CD14-positive monocyte (primary cell): ENCODE measurements at regions of chr17 and their contacts with region 1.

Region 1: GRCh38 chr17:979538-980405 is at the start of gene NXN:
- DNase-seq: peak; percentile 60 to 83 (median 77)
- H3K4me3 ChIP-seq: peak within 1 kb of the TSS; percentile 55 to 81 (median 57)
- H3K4me3 Mint-ChIP-seq: peak within 1 kb of the TSS; percentile 83 to 90
- H3K27ac ChIP-seq: peak within 1 kb of the TSS in 1 of 2 donors; percentile 11
- H3K27ac Mint-ChIP-seq: peak within 1 kb of the TSS in 4 of 7 donors; percentile 26 to 66 (median 41)
- H3K4me1 ChIP-seq: peaks cover 20 to 21% of the 10 kb centered on the region in 2 donors
- H3K4me1 Mint-ChIP-seq: peaks cover 24% of the 10 kb centered on the region
- H3K27me3 ChIP-seq: peaks cover 30 to 41% of the 10 kb centered on the region in 2 donors
- H3K27me3 Mint-ChIP-seq: peaks cover 32 to 50% (median 35%) of the 10 kb centered on the region in 3 donors
- CTCF ChIP-seq: no peak
- polyA plus RNA-seq, gene NXN: not detected

Region 2: GRCh38 chr17:781805-782731 is 197.7 kb before region 1 on chr17 and contains the starts of genes GLOD4 and MRM3:
- intact Hi-C with region 1: loop called in 1 of 2 experiments (anchors 5 kb)
- DNase-seq: peak; percentile 90 to 93 (median 92)
- H3K4me3 ChIP-seq: peak within 1 kb of the TSS; percentile 81 to 98 (median 86)
- H3K4me3 Mint-ChIP-seq: peak within 1 kb of the TSS; percentile 94 to 98
- H3K27ac ChIP-seq: peak within 1 kb of the TSS; percentile 51 to 97
- H3K27ac Mint-ChIP-seq: peak within 1 kb of the TSS; percentile 92 to 99 (median 96)
- H3K4me1 ChIP-seq: peaks cover 17 to 24% of the 10 kb centered on the region in 2 donors
- H3K4me1 Mint-ChIP-seq: peaks cover 16% of the 10 kb centered on the region
- H3K27me3 ChIP-seq: no peaks in the 10 kb centered on the region
- H3K27me3 Mint-ChIP-seq: peaks cover 0 to 2% (median 1%) of the 10 kb centered on the region in 3 donors
- CTCF ChIP-seq: no peak
- polyA plus RNA-seq, gene GLOD4: 41.8 to 50.7 (median 50.6) TPM
- polyA plus RNA-seq, gene MRM3: 9.3 to 15.4 (median 12.8) TPM

Region 3: DNA sequence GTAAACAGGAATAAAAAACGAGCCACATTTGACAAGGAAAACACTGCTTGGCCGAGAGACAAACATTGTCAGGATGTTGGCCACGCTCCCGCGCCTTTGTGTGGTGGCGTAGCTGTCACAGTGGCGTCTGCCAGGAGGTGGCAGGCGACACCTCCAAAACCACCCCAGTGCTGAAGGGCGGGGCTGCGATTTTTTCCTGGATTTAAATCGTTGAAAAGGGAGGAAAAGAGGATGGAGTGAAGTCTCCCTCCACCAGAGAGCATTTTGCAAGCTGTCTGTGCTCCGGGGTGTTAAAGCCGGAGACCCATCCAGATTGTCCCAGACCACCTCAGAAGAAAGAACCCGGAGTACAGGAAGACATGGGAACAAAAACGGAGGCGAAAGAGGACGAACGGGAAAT is 184.9 kb before region 1 on chr17:
- intact Hi-C with region 1: loop called (anchors 5 kb)
- DNase-seq: peak in 2 of 3 donors; percentile 16 to 34
- H3K4me3 ChIP-seq: no peak overlapping the region
- H3K4me3 Mint-ChIP-seq: peak overlapping the region in 1 of 2 donors; percentile 51
- H3K27ac ChIP-seq: no peak overlapping the region
- H3K27ac Mint-ChIP-seq: no peak overlapping the region
- H3K4me1 ChIP-seq: no peaks in the 10 kb centered on the region
- H3K4me1 Mint-ChIP-seq: peaks cover 7% of the 10 kb centered on the region
- H3K27me3 ChIP-seq: no peaks in the 10 kb centered on the region
- H3K27me3 Mint-ChIP-seq: peaks cover 4 to 7% (median 6%) of the 10 kb centered on the region in 3 donors
- CTCF ChIP-seq: peak; percentile 62

Region 4: GRCh38 chr17:879549-880442 is 100.0 kb before region 1 on chr17:
- intact Hi-C with region 1: loop called in 1 of 2 experiments (anchors 2 kb)
- DNase-seq: peak; percentile 34 to 52 (median 35)
- H3K4me3 ChIP-seq: no peak overlapping the region
- H3K4me3 Mint-ChIP-seq: no peak overlapping the region
- H3K27ac ChIP-seq: no peak overlapping the region
- H3K27ac Mint-ChIP-seq: no peak overlapping the region
- H3K4me1 ChIP-seq: no peaks in the 10 kb centered on the region
- H3K4me1 Mint-ChIP-seq: peaks cover 12% of the 10 kb centered on the region
- H3K27me3 ChIP-seq: no peaks in the 10 kb centered on the region
- H3K27me3 Mint-ChIP-seq: peaks cover 14 to 35% (median 23%) of the 10 kb centered on the region in 3 donors
- CTCF ChIP-seq: peak; percentile 70

Region 5: DNA sequence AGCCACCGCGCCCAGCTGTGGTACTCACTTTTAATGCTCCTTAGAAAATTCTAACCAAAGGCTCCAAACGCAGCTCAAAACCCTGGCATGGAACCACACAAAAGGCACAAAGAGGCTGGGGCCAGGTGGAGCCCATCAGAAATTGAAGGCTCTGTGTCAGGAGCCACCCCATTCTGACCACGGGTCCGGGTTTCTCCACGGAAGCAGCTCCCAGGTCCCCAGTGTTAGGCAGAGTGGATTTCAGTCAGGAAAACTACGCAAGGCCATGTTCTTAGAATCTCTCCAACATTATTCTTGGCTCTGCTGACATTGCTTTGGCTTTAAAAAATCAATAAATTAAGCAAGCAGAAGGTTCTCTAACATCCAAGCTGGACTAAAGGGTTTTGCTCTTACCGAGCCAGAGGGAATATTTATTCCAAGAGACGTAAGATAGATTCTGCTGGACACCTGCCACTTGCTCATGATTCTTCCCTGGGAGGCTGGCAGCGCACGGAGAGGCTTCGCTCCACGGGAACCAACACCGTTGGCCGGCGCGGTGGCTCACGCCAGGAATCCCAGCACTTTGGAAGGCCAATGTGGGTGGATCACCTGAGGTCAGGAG is 93.7 kb before region 1 on chr17:
- intact Hi-C with region 1: loop called in 1 of 2 experiments (anchors 5 kb)
- DNase-seq: no peak
- H3K4me3 ChIP-seq: no peak overlapping the region
- H3K4me3 Mint-ChIP-seq: no peak overlapping the region
- H3K27ac ChIP-seq: no peak overlapping the region
- H3K27ac Mint-ChIP-seq: peak overlapping the region in 1 of 7 donors; percentile 6
- H3K4me1 ChIP-seq: no peaks in the 10 kb centered on the region
- H3K4me1 Mint-ChIP-seq: peaks cover 7% of the 10 kb centered on the region
- H3K27me3 ChIP-seq: peaks cover 0 to 8% of the 10 kb centered on the region in 2 donors
- H3K27me3 Mint-ChIP-seq: peaks cover 24 to 43% (median 24%) of the 10 kb centered on the region in 3 donors
- CTCF ChIP-seq: no peak

Region 6: GRCh38 chr17:896953-897661 is 82.7 kb before region 1 on chr17:
- intact Hi-C with region 1: no loop called
- DNase-seq: peak; percentile 34 to 37 (median 35)
- H3K4me3 ChIP-seq: peak overlapping the region in 1 of 3 experiments; percentile 10
- H3K4me3 Mint-ChIP-seq: peak overlapping the region; percentile 23 to 27
- H3K27ac ChIP-seq: no peak overlapping the region
- H3K27ac Mint-ChIP-seq: peak overlapping the region in 3 of 7 donors; percentile 16 to 63 (median 29)
- H3K4me1 ChIP-seq: peaks cover 17 to 20% of the 10 kb centered on the region in 2 donors
- H3K4me1 Mint-ChIP-seq: peaks cover 22% of the 10 kb centered on the region
- H3K27me3 ChIP-seq: peaks cover 0 to 15% of the 10 kb centered on the region in 2 donors
- H3K27me3 Mint-ChIP-seq: peaks cover 26 to 59% (median 50%) of the 10 kb centered on the region in 3 donors
- CTCF ChIP-seq: no peak

Region 7: DNA sequence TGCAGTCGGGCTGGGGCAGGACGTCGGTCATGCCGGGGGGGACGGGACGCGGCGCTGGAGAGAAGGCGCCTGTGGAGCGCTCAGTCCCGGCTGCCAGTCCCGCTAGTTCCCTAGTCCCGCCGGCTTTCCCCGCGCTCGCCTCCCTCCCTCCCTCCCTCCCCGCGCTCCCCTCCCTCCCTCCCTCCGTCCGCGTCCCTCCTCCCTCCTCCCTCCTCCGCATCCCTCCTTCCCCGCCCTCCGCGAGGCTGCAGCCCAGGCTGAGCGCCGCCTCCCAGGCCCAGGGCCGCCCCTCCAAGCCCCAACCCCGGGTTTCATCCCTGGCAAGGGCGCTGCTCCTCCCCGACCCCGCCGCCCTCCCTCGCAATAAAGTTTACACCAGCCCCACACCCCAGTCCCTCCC is 51.9 kb after region 1 on chr17:
- intact Hi-C with region 1: no loop called
- DNase-seq: no peak
- H3K4me3 ChIP-seq: no peak overlapping the region
- H3K4me3 Mint-ChIP-seq: no peak overlapping the region
- H3K27ac ChIP-seq: no peak overlapping the region
- H3K27ac Mint-ChIP-seq: no peak overlapping the region
- H3K4me1 ChIP-seq: no peaks in the 10 kb centered on the region
- H3K4me1 Mint-ChIP-seq: peaks cover 13% of the 10 kb centered on the region
- H3K27me3 ChIP-seq: no peaks in the 10 kb centered on the region
- H3K27me3 Mint-ChIP-seq: no peaks in the 10 kb centered on the region
- CTCF ChIP-seq: no peak

Region 8: DNA sequence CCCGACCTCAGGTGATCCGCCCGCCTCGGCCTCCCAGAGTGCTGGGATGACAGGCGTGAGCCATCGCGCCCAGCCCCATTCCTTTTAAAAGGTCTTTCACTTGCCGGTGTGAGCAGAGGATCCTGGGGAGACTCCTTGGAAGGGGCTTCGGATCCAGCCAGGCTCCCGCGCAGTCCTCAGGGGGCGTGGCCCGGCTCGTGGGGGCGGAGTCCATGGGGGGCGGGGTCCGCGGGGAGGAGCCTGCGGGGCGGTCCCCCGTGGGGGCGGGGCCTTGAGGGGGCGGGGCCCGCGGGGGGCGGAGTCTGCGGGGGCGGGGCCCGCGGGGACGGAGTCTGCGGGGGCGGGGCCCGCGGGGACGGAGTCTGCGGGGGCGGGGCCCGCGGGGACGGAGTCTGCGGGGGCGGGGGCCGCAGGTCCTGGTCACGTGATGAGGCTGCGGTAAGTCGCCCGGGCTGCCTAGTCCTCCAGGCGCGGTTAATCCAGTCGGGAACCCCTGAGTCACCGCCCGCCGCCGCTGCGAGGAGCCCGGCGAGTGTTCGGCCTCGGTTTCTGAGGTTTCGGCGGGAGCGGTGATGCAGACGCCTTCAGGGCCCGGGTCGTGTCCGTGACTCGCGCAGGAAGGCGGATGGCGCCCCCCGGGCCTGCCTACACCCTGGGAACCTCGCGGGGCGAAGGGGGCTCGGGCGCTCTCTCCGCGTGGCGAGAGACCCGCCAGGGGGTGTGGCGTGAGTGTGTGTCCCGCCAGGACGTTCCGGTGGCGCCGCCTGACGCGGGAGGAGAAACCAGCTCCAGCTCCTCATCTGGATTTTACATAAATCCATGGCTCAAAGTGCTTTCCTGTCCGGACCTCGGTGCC is 223.6 kb after region 1 on chr17:
- intact Hi-C with region 1: loop called in 1 of 2 experiments (anchors 5 kb)
- DNase-seq: peak; percentile 81 to 94 (median 89)
- H3K4me3 ChIP-seq: peak overlapping the region; percentile 45 to 79 (median 48)
- H3K4me3 Mint-ChIP-seq: peak overlapping the region; percentile 77 to 84
- H3K27ac ChIP-seq: peak overlapping the region; percentile 43 to 81
- H3K27ac Mint-ChIP-seq: peak overlapping the region in 6 of 7 donors; percentile 53 to 85 (median 70)
- H3K4me1 ChIP-seq: peaks cover 78 to 97% of the 10 kb centered on the region in 2 donors
- H3K4me1 Mint-ChIP-seq: peaks cover 83% of the 10 kb centered on the region
- H3K27me3 ChIP-seq: no peaks in the 10 kb centered on the region
- H3K27me3 Mint-ChIP-seq: peaks cover 0 to 1% (median 0%) of the 10 kb centered on the region in 3 donors
- CTCF ChIP-seq: no peak